ENCODE measurements at regions of chr1 and their contacts with region 1.

Region 1: DNA sequence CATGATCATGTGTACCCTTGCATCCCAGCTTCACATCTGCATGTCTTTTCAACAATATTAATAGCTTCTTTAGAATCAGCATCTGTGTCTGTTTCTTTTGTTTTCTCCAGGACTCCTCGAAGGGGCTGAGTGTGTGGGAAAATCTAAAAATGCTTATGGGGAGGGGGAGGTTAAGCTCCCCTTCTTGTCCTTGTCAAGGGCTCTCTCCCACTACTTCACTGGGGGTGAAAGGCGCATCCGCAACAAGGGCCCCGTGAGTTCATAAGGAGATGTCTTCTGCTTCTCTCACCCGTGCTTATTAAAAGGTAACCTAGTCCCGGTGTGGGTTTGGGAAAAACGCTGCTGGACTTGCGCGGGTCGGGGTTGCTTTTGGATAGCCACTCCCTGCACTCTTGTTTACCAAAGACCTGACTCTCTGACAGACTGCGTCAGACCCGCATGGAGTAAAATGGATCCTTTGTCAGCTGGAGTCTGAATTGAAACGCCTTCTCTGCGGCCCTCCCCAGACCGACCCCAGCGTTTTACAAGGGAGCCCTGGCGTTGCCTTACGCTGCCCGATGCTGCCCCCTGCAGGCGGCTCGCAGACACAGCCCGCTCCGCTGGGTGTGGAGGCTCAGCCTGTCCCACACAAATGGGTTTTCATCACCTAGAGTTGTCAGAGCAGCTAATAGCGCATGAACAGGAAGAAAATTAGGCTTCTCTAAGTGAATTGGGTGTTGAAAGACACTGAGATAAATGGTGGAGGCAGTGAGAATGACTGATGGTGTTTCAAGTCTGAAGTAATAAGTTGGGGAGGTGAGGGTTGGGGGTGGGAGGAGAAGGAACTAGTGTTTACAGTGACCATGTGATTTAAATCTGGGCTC is 53.8 kb downstream of the IER5 start:
- DNase-seq: peak; percentile 36
- H3K4me3 ChIP-seq: peak overlapping the region; percentile 43
- CTCF ChIP-seq: peak; percentile 98

Region 2: GRCh38 chr1:180898441-180899219 is 243.7 kb before region 1 on chr1:
- CTCF ChIA-PET with region 1: interaction called, 12 read pairs
- POLR2A ChIA-PET with region 1: no interaction called
- DNase-seq: no peak
- H3K4me3 ChIP-seq: no peak overlapping the region
- CTCF ChIP-seq: no peak

Region 3: GRCh38 chr1:180997843-180998504 is 144.4 kb before region 1 on chr1:
- CTCF ChIA-PET with region 1: interaction called, 20 read pairs
- POLR2A ChIA-PET with region 1: no interaction called
- DNase-seq: no peak
- H3K4me3 ChIP-seq: no peak overlapping the region
- CTCF ChIP-seq: no peak

Region 4: DNA sequence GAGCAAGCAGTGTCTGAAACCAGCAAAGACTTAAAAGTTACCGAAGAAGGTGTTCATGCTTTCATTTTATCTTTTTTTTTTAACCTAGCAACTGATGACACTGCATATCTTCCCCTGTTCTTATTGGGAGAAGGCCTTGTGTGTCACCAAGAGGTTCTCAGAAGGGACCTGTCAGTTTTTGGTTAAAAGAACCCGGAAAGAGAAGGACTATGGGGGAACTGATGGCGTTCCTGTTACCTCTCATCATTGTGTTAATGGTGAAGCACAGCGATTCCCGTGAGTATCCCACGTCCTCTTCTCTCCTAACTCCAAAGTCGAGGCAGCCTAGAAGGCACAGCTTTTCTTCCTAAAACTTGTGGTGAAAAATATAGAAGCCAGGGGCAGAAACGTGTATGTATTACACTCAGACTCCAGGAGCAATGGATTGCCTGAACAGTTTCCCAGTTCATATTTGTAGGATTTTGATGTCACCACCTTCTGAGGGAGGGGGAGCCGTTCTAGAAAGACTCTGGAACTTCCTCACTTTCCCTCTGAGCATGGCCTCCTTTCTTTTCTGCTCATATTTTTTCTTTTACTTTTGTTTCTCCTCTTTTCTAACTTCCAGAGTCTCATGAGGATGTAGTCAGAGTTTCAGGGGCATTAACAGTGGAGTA is 108.4 kb before region 1 on chr1 and contains the start of gene MR1:
- CTCF ChIA-PET with region 1: interaction called, 362 read pairs
- POLR2A ChIA-PET with region 1: interaction called, 3 read pairs
- DNase-seq: no peak
- H3K4me3 ChIP-seq: peak within 1 kb of the TSS; percentile 41
- CTCF ChIP-seq: no peak

Region 5: GRCh38 chr1:181099152-181100014 is 42.9 kb before region 1 on chr1:
- CTCF ChIA-PET with region 1: interaction called, 54 read pairs
- POLR2A ChIA-PET with region 1: interaction called, 11 read pairs
- DNase-seq: no peak
- H3K4me3 ChIP-seq: no peak overlapping the region
- CTCF ChIP-seq: no peak

Region 6: DNA sequence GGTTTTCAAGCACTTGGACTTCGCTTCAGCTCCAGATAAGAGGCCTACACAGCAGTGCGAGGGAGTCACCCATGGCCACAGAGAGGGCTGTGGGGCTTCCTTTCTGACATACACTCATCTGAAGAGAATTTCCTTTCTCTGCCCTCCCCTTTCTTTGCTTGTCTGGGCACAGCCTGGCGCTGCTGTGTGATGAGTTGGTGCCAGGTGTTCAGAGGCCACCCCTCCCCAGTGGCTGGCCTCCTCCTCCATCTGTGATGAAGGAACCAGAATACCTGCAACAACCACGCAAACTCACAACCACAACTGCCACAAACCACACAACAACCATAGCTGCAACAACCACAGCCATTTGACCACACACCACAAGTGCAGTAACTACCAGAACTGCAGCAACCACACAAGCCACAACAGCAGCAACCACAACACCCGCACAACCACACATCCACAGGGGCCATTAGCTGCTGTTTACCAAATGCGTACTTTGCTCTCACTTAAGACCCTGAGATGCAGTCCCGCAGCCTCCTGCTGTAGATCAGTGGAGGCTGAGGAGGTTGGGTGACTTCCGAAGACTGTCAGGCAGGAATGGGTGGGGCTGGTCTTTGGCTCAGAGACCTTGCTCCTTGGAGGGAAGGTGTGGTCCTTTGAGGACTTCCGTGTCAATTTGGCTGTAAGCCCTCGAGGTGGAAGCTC is 17.3 kb after region 1 on chr1:
- CTCF ChIA-PET with region 1: interaction called, 109 read pairs
- POLR2A ChIA-PET with region 1: interaction called, 3 read pairs
- DNase-seq: no peak
- H3K4me3 ChIP-seq: no peak overlapping the region
- CTCF ChIP-seq: no peak

Region 7: DNA sequence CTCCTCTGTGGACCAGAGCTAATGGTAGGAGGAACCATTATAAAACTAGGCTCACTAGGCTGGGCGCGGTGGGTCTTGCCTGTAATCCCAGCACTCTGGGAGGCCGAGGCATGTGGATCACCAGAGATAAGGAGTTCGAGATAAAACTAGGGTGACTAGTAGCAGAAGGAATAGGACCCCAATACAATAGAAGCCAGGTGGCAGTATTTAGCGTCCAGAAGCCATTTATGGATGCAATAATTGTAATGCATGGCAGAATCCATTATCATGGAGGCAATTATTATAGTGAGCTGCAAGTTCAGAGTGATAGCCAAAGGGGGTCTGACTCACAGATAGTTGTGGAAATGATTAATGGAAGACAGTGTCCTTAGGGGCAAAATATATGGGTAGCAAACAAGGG is 90.2 kb after region 1 on chr1:
- CTCF ChIA-PET with region 1: no interaction called
- POLR2A ChIA-PET with region 1: no interaction called
- DNase-seq: no peak
- H3K4me3 ChIP-seq: no peak overlapping the region
- CTCF ChIP-seq: no peak